ENCODE measurements at regions of chr3 and their contacts with region 1.

Region 1: GRCh38 chr3:122564155-122564912 is at the starts of genes DTX3L and PARP9:
- DNase-seq: peak; percentile 75
- H3K4me3 Mint-ChIP-seq: peak within 1 kb of the TSS; percentile 87
- H3K27ac Mint-ChIP-seq: peak within 1 kb of the TSS; percentile 93
- H3K4me1 Mint-ChIP-seq: peaks cover 70% of the 10 kb centered on the region
- H3K27me3 Mint-ChIP-seq: no peaks in the 10 kb centered on the region
- total RNA-seq, gene DTX3L: 22.3 to 24.5 TPM
- total RNA-seq, gene PARP9: 20.4 to 21.1 TPM

Region 2: DNA sequence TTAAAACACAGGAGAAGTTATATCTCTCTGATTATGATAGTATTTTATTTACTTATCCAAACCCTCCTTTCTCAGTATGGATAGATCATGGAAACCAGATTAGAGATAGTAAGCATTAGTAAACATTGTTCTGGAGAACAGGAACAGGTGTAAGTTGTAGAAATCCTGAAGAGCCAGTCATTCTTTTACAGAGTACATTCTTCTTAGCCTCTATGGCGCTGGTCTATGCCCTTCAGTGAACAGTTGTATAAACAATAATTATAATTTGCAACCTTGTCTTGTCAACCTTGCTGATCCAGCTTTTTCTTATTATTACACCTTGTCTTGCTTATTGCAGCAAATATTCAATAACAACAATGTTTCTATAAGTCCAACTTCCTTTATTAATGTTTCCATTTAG is 622.7 kb before region 1 on chr3:
- CTCF ChIA-PET with region 1: no interaction called
- intact Hi-C with region 1: no loop called
- DNase-seq: no peak
- H3K4me3 Mint-ChIP-seq: no peak overlapping the region
- H3K27ac Mint-ChIP-seq: no peak overlapping the region
- H3K4me1 Mint-ChIP-seq: no peaks in the 10 kb centered on the region
- H3K27me3 Mint-ChIP-seq: no peaks in the 10 kb centered on the region

Region 3: DNA sequence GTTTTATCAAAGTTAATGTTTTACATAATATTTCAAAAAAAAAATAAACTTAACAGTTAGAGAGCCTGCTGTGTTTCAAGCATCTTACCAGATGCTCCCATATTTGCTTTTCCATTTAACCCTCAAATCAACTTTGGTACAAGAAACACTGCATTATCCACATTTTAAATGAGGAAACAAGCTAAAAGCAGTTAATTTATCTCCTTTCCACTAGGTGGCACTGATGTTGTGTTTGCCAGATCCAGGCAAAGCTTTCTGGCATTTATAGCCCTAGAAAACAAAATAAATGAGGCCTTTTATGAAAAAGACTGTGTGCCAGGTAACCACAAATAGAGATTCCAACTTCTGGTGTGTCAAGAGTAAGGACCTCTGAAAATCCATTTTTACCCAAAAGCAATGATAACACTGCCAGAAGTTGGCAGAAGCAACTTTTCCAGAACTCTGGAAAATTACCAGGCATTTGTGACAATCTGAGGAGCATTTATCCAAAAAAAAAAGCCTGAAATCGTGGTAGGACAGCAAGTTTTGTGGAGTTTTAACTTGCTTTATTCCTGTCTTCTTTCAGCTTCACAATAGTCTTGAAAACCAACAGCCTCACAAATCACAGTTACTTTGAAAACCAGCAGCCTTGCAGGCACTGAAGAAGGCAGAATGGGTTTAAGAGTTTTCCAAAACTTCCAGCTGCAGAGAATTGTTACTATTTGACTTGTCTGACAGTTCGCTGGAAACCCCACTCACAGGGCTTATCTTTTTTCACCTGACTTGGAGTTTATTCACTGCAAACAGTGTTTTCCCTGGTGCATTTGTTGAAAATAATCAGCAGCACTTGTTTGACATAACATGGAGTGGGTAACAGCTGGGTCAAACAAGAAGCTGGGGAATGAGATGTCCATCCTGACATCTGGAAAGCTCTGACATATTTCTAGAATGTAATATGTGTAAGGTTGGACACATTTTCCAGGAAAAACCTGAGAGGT is 171.2 kb before region 1 on chr3:
- CTCF ChIA-PET with region 1: no interaction called
- intact Hi-C with region 1: loop called (anchors 1 kb)
- DNase-seq: peak; percentile 34
- H3K4me3 Mint-ChIP-seq: no peak overlapping the region
- H3K27ac Mint-ChIP-seq: no peak overlapping the region
- H3K4me1 Mint-ChIP-seq: peaks cover 41% of the 10 kb centered on the region
- H3K27me3 Mint-ChIP-seq: no peaks in the 10 kb centered on the region

Region 4: GRCh38 chr3:122548076-122548475 is 16.3 kb before region 1 on chr3:
- CTCF ChIA-PET with region 1: interaction called, 10 read pairs
- intact Hi-C with region 1: no loop called
- DNase-seq: no peak
- H3K4me3 Mint-ChIP-seq: no peak overlapping the region
- H3K27ac Mint-ChIP-seq: no peak overlapping the region
- H3K4me1 Mint-ChIP-seq: no peaks in the 10 kb centered on the region
- H3K27me3 Mint-ChIP-seq: no peaks in the 10 kb centered on the region

Region 5: DNA sequence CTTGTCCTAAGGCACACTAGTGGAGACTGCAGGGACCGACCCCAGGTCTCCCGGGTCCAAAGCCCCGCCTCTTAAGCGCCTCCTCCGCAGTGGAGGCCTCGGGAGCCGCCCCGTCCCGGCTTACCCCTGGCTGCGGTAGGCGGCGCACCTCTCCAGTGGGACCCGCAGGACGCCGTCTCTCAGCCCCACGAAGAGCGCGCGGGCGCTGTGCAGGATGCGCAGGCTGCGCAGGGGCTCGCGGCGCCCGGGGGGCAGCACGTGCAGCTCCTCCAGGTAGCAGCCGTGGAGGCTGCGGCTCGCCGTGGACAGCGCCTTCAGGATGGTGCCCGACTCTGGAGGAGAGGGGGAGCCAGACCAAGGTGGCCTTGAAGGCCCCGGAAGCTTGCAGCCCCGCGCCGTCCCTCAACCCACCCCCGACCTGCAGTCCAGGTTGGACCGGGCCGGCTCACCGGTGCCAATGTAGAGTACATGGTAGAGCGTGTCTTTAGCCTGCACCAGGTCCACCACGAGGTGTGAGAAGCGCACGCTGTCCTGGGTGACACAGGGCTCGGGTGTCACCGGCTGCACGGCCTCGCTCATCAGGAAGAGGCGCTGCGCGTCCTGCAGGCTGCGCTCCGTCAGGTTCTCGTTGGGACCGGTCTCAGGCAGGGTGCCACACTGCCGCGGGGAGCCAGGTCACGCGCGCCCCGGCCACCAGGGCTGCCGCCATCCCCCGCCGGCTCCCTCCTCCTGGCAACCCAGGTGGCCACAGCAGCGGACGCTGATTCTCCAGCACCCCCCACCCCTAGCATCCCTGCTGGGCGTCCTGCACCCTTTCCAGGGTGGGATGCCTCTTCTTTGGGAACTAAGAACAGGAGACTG is 357.7 kb after region 1 on chr3:
- CTCF ChIA-PET with region 1: no interaction called
- intact Hi-C with region 1: loop called (anchors 10 kb)
- DNase-seq: peak; percentile 57
- H3K4me3 Mint-ChIP-seq: no peak overlapping the region
- H3K27ac Mint-ChIP-seq: no peak overlapping the region
- H3K4me1 Mint-ChIP-seq: no peaks in the 10 kb centered on the region
- H3K27me3 Mint-ChIP-seq: peaks cover 15% of the 10 kb centered on the region

Measured in activated naive CD4-positive, alpha-beta T cell treated with anti-CD3 and anti-CD28 coated beads for 36 hours (primary cell).